Endothelial cell of umbilical vein (primary cell): ENCODE measurements at regions of chr1 and their contacts with region 1.

Region 1: GRCh38 chr1:232635778-232636356 is 5.9 kb upstream of the SIPA1L2 start:
- DNase-seq: peak; percentile 59
- H3K4me3 ChIP-seq: no peak overlapping the region
- H3K27ac ChIP-seq: no peak overlapping the region
- H3K4me1 ChIP-seq: peaks cover 4% of the 10 kb centered on the region
- H3K27me3 ChIP-seq: no peaks in the 10 kb centered on the region
- CTCF ChIP-seq: peak; percentile 52 to 53
- POLR2A ChIP-seq: no peak

Region 2: DNA sequence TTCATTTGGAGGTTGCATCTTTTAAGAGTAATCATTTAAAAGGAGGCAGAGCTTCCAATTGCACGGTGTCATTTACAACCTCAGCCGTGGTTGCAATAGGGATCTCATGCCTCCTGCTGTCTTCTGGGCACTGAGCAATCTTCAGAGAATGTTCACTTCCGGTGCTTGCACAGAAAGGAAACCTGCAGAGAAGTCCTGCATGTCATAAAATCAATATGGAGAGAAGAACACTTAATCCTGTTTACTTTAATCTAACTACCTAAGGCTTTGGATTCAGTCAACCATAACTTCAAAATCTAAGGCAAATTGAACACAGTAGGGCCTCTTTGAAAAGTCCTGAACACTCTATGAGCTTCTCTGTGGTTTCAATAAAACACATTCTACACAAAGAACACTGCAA is 158.1 kb after region 1 on chr1:
- CTCF ChIA-PET with region 1: interaction called, 7 read pairs
- POLR2A ChIA-PET with region 1: no interaction called
- dilution Hi-C with region 1: no loop called
- intact Hi-C with region 1: loop called (anchors 5 kb)
- DNase-seq: peak; percentile 25
- H3K4me3 ChIP-seq: no peak overlapping the region
- H3K27ac ChIP-seq: no peak overlapping the region
- H3K4me1 ChIP-seq: peaks cover 3% of the 10 kb centered on the region
- H3K27me3 ChIP-seq: no peaks in the 10 kb centered on the region
- CTCF ChIP-seq: no peak
- POLR2A ChIP-seq: no peak

Region 3: GRCh38 chr1:232880354-232880753 is 244.5 kb after region 1 on chr1:
- CTCF ChIA-PET with region 1: interaction called, 4 read pairs
- POLR2A ChIA-PET with region 1: no interaction called
- dilution Hi-C with region 1: no loop called
- intact Hi-C with region 1: loop called (anchors 2 kb)
- DNase-seq: peak; percentile 26
- H3K4me3 ChIP-seq: no peak overlapping the region
- H3K27ac ChIP-seq: no peak overlapping the region
- H3K4me1 ChIP-seq: no peaks in the 10 kb centered on the region
- H3K27me3 ChIP-seq: no peaks in the 10 kb centered on the region
- CTCF ChIP-seq: peak; percentile 36 to 62
- POLR2A ChIP-seq: no peak

Region 4: GRCh38 chr1:233025157-233025915 is 389.5 kb after region 1 on chr1:
- CTCF ChIA-PET with region 1: interaction called, 12 read pairs
- POLR2A ChIA-PET with region 1: no interaction called
- dilution Hi-C with region 1: no loop called
- intact Hi-C with region 1: loop called (anchors 1 kb)
- DNase-seq: peak; percentile 68
- H3K4me3 ChIP-seq: no peak overlapping the region
- H3K27ac ChIP-seq: no peak overlapping the region
- H3K4me1 ChIP-seq: peaks cover 6% of the 10 kb centered on the region
- H3K27me3 ChIP-seq: no peaks in the 10 kb centered on the region
- CTCF ChIP-seq: peak; percentile 31 to 69
- POLR2A ChIP-seq: no peak

Region 5: GRCh38 chr1:233480198-233480597 is 844.3 kb after region 1 on chr1:
- CTCF ChIA-PET with region 1: no interaction called
- POLR2A ChIA-PET with region 1: no interaction called
- dilution Hi-C with region 1: no loop called
- intact Hi-C with region 1: no loop called
- DNase-seq: no peak
- H3K4me3 ChIP-seq: no peak overlapping the region
- H3K27ac ChIP-seq: no peak overlapping the region
- H3K4me1 ChIP-seq: no peaks in the 10 kb centered on the region
- H3K27me3 ChIP-seq: no peaks in the 10 kb centered on the region
- CTCF ChIP-seq: no peak
- POLR2A ChIP-seq: no peak